ENCODE measurements at regions of chr5 and their contacts with region 1.

Region 1: DNA sequence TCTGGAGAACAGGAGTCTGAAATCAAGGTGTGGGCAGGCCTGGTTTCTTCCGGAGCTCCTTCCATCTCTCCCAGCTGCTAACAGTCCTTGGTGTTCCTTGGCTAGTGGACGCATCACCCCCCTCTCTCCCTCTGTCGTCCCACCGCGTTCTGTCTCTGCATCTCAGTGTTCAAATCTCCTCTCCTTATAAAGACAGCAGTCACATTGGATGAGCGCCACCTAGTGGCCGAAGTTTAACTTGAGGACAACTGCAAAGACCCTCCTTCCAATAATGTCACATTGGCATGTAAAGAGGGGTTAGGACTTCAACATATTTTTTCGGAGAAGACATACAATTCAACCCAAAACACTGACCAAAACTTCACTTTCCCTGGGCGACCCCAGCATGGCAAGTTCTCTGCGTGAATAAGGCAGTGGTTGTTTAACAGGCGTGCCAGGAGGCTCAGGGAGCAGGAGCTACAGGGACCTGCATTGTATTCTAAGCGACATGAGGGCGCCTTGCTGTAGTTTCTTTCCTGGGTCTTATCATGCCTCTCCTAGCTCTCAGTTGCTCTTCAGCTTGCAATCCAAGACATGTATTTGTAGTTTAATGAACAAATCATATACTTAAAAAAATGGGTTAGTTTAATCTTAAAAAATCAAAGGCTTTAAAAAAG is 27.9 kb upstream of the BASP1 start:
- DNase-seq: peak in 1 of 2 donors; percentile 81
- H3K4me3 ChIP-seq: no peak overlapping the region
- H3K27ac ChIP-seq: no peak overlapping the region
- H3K4me1 ChIP-seq: no peaks in the 10 kb centered on the region
- H3K27me3 ChIP-seq: no peaks in the 10 kb centered on the region
- CTCF ChIP-seq: peak; percentile 47 to 83 (median 72)

Region 2: DNA sequence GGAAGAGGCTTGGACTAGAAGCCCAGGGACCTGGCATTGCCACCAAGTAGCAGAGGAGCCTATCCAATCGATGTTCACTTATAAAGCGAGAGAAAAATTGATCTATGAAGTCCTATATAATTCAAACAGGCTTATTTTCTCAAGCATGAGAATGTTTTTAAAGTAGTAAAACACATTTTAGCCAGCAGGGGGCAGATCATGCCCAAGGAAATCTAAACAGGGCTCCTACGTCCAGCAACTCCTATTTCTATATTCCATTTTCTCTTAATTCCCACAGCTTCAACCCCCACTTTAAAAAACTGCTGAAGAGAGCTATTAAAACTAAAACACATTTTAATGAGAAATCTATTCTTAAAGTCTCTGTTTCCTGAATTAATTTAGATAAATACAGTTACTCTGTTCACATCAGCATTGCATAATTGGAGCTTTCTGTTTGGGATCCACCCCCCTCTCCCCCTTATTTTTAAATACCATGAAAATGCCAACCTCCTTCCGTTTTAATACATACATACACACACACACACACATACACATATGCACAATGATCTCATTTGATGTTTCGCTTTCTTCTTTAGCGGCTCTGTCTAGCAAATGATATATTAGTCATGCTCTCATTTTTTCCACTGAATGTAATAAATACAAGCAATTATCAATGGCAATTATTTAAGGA is 398.3 kb before region 1 on chr5:
- intact Hi-C with region 1: loop called (anchors 1 kb)
- DNase-seq: no peak
- H3K4me3 ChIP-seq: no peak overlapping the region
- H3K27ac ChIP-seq: no peak overlapping the region
- H3K4me1 ChIP-seq: no peaks in the 10 kb centered on the region
- H3K27me3 ChIP-seq: no peaks in the 10 kb centered on the region
- CTCF ChIP-seq: peak; percentile 53 to 69 (median 56)

Region 3: DNA sequence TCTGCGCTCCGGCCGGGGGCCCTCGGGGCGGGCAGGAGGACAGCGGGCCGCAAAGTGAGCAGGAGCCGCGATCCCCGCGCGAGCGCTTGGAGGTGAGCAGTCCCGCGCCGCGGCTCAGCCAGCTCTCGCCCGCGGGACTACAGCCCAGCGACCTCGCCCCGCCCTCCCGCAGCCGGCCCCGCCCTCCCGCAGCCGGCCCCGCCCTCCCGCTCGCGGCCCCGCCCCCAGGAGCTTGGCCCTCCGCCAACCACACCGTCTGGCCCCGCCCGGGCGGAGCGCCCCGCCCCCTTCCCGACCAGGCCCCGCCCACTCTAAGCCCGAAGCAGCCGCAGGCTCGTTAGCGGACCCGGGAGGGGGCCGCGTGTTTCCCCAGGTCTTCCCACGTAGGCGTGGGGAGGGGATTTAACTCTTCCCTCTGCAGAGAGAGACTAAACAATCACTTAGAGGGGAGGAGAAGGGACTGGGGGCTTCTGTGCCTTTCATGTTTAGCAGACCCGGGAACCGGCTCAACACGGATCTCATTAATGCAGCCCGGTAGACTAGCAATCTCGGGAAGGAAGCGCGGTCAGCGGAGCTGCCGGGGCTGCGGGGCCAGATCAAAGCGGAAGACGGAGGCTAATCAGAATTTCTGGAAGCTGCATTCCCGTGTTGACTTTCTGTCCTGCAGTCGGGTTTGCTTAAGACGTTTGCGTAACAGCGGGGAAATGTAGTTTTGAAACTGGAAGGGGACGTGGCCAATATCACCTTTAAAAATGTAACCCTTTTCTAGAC is 253.2 kb before region 1 on chr5 and contains the start of gene MYO10:
- intact Hi-C with region 1: loop called (anchors 5 kb)
- DNase-seq: peak in 1 of 2 donors; percentile 79
- H3K4me3 ChIP-seq: peak within 1 kb of the TSS; percentile 56 to 88
- H3K27ac ChIP-seq: peak within 1 kb of the TSS; percentile 55 to 56
- H3K4me1 ChIP-seq: no peaks in the 10 kb centered on the region
- H3K27me3 ChIP-seq: no peaks in the 10 kb centered on the region
- CTCF ChIP-seq: no peak
- total RNA-seq, gene MYO10: 20.0 TPM

Region 4: GRCh38 chr5:16983022-16983639 is 206.4 kb before region 1 on chr5:
- intact Hi-C with region 1: no loop called
- DNase-seq: no peak
- H3K4me3 ChIP-seq: no peak overlapping the region
- H3K27ac ChIP-seq: no peak overlapping the region
- H3K4me1 ChIP-seq: no peaks in the 10 kb centered on the region
- H3K27me3 ChIP-seq: no peaks in the 10 kb centered on the region
- CTCF ChIP-seq: no peak

Region 5: DNA sequence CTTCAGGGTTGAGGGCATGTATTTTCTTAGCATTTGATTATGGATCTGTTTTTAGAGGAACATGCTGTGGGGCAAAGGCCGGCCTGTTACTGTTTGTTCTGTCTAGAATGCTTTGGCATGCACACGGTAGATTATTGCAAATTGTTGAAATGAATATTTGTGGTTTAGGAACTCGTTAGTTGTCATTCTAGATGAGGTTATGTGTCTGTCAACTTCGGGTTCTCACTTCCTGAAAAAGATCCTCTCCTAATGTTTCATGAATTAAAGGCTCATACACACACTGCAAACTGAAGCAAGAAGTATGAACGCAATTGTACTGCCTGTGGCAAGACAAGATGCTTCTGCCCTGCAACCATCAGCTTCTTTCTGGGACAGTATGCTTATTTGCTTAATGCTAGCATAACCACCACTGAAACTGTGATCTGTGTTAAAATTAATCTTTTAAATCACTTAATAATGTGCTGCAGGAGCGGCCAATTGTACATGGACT is 127.5 kb after region 1 on chr5:
- intact Hi-C with region 1: no loop called
- DNase-seq: no peak
- H3K4me3 ChIP-seq: no peak overlapping the region
- H3K27ac ChIP-seq: no peak overlapping the region
- H3K4me1 ChIP-seq: no peaks in the 10 kb centered on the region
- H3K27me3 ChIP-seq: no peaks in the 10 kb centered on the region
- CTCF ChIP-seq: no peak